ENCODE measurements at regions of chr15 and their contacts with region 1.

Region 1: GRCh38 chr15:86629409-86630356 is 550.0 kb downstream of the AGBL1 start:
- DNase-seq: no peak
- ATAC-seq: no peak
- H3K4me3 ChIP-seq: no peak overlapping the region
- H3K27ac ChIP-seq: no peak overlapping the region
- H3K4me1 ChIP-seq: no peaks in the 10 kb centered on the region
- H3K27me3 ChIP-seq: no peaks in the 10 kb centered on the region

Region 2: GRCh38 chr15:86677278-86677677 is 47.6 kb after region 1 on chr15:
- intact Hi-C with region 1: no loop called
- DNase-seq: no peak
- ATAC-seq: no peak
- H3K4me3 ChIP-seq: no peak overlapping the region
- H3K27ac ChIP-seq: no peak overlapping the region
- H3K4me1 ChIP-seq: no peaks in the 10 kb centered on the region
- H3K27me3 ChIP-seq: no peaks in the 10 kb centered on the region

Region 3: DNA sequence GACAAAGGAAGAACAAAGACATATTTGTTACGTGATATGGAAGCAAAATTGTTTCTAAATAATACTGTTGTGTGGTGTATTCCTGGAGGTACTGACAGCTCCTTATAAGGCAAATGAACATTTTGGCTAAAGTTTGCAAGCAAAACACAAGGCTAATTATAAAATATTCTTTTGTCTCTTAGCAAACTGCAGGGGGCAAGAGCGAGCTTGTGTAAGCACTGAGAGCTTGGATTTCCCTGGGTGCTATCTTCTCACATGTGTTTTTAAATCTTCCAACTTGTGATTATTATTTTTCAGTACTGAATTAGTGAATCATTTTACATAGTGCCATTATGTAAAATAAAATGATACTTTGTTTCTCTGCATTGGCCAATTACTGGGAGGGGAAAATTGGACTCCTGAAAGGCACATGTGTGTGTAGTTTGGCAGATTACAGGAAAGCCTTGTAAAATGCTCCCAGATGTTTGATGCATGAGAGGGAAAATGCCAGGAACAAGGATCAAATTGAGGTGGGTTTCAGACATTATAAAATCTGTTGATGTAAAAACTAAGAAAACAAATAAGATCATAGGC is 61.5 kb after region 1 on chr15:
- intact Hi-C with region 1: loop called in 1 of 4 experiments (anchors 10 kb)
- DNase-seq: peak in 1 of 3 donors; percentile 4
- ATAC-seq: no peak
- H3K4me3 ChIP-seq: no peak overlapping the region
- H3K27ac ChIP-seq: no peak overlapping the region
- H3K4me1 ChIP-seq: no peaks in the 10 kb centered on the region
- H3K27me3 ChIP-seq: no peaks in the 10 kb centered on the region

Measured in right cardiac atrium (tissue), 5 donors.